PC-3 (cell line): ENCODE measurements at regions of chr2 and their contacts with region 1.

Region 1: GRCh38 chr2:195543902-195544894 is 112.8 kb upstream of the SLC39A10 start:
- DNase-seq: peak; percentile 91
- ATAC-seq: peak; percentile 100
- H3K4me3 ChIP-seq: peak overlapping the region; percentile 21; the same call in 1 of the 2 replicates
- H3K27ac ChIP-seq: peak overlapping the region; percentile 81
- H3K4me1 ChIP-seq: peaks cover 10% of the 10 kb centered on the region
- H3K27me3 ChIP-seq: no peaks in the 10 kb centered on the region
- CTCF ChIP-seq: no peak

Region 2: DNA sequence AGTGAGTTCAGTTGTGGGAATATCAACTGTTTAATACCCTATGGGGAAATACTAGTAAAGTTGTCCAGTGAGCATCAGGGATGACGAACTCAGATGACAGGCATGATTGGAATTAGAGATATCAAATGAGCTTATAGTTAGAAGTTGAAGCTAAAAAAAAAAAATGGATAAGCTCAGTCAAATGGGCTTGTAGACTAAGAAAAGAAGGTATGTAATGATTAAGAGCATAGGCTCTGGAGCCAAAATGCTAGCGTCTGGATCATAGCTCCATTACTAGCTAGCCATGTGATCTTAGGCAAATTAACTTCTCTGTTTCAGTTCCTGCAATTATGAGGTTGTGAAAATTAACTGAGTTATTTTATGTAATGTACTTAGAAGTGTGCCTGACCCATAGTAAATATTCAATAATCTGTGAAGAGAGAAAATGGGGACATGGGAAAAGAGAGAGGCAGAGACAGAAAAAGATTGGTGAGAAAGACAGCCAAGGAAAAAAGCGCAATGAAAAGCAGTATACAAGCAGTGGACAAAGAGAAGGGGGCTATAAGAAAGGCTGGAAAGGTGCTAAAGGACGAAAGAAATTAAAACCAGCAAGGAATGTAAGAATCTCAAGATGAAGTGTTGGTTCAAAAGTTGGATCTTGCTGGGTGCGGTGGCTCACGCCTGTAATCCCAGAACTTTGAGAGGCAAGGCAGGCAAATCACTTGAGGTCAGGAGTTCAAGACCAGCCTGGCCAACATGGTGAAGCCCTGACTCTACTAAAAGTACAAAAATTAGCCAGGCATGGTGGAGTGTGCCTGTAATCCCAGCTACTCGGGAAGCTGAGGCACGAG is 17.2 kb after region 1 on chr2:
- CTCF ChIA-PET with region 1: no interaction called
- POLR2A ChIA-PET with region 1: interaction called, 5 read pairs
- intact Hi-C with region 1: loop called (anchors 1 kb)
- DNase-seq: peak; percentile 95
- ATAC-seq: peak; percentile 64
- H3K4me3 ChIP-seq: no peak overlapping the region
- H3K27ac ChIP-seq: peak overlapping the region; percentile 96
- H3K4me1 ChIP-seq: peaks cover 64% of the 10 kb centered on the region
- H3K27me3 ChIP-seq: no peaks in the 10 kb centered on the region
- CTCF ChIP-seq: no peak

Region 3: DNA sequence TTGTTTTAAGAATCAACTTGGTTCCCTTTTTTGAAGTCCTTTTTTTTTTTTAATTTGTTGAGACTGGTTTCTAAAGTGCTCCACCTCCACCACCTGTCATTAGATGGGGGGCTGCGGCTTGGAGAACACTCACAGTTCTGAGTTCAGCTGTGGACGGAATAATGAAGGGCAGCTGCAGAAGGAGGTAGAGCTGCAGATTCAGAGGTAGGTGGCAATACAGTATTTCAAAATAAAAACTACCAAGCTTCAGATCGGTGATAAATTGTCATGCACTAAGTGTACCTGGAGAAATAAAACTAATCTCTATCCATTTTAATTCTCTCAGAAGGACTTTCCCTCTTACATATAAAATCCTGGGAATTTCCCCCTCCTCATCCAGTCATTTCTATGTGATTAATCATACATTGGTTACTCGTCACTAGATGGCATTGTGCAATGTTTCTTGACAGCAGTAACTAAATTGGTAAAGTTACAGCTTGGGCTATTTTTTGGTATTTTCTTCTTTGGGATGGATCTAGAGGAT is 31.7 kb after region 1 on chr2:
- CTCF ChIA-PET with region 1: no interaction called
- POLR2A ChIA-PET with region 1: no interaction called
- intact Hi-C with region 1: loop called (anchors 1 kb)
- DNase-seq: peak; percentile 94
- ATAC-seq: peak; percentile 87
- H3K4me3 ChIP-seq: no peak overlapping the region; the same call in 1 of the 2 replicates
- H3K27ac ChIP-seq: peak overlapping the region; percentile 45
- H3K4me1 ChIP-seq: peaks cover 13% of the 10 kb centered on the region
- H3K27me3 ChIP-seq: no peaks in the 10 kb centered on the region
- CTCF ChIP-seq: peak; percentile 59